Activated CD4-positive, alpha-beta T cell treated with anti-CD3 and anti-CD28 coated beads for 36 hours (primary cell): ENCODE measurements at regions of chr6 and their contacts with region 1.

Region 1: GRCh38 chr6:42928986-42929820 is at the start of gene CNPY3:
- DNase-seq: peak; percentile 98
- ATAC-seq: peak; percentile 88
- H3K4me3 Mint-ChIP-seq: peak within 1 kb of the TSS; percentile 84
- H3K27ac Mint-ChIP-seq: peak within 1 kb of the TSS; percentile 93
- H3K4me1 Mint-ChIP-seq: peaks cover 40% of the 10 kb centered on the region
- H3K27me3 Mint-ChIP-seq: no peaks in the 10 kb centered on the region
- total RNA-seq, gene CNPY3: 33.0 to 34.3 TPM

Region 2: GRCh38 chr6:42782622-42783176 is 146.5 kb before region 1 on chr6:
- CTCF ChIA-PET with region 1: no interaction called
- POLR2A ChIA-PET with region 1: interaction called, 3 read pairs
- intact Hi-C with region 1: loop called in 1 of 2 experiments (anchors 1 kb)
- DNase-seq: peak; percentile 83
- ATAC-seq: peak; percentile 64
- H3K4me3 Mint-ChIP-seq: peak overlapping the region; percentile 81
- H3K27ac Mint-ChIP-seq: peak overlapping the region; percentile 96
- H3K4me1 Mint-ChIP-seq: peaks cover 25% of the 10 kb centered on the region
- H3K27me3 Mint-ChIP-seq: no peaks in the 10 kb centered on the region

Region 3: GRCh38 chr6:42901536-42901957 is 27.7 kb before region 1 on chr6:
- CTCF ChIA-PET with region 1: interaction called, 9 read pairs
- POLR2A ChIA-PET with region 1: no interaction called
- intact Hi-C with region 1: loop called in 1 of 2 experiments (anchors 1 kb)
- DNase-seq: peak; percentile 77
- ATAC-seq: peak; percentile 93
- H3K4me3 Mint-ChIP-seq: peak overlapping the region; percentile 7
- H3K27ac Mint-ChIP-seq: no peak overlapping the region
- H3K4me1 Mint-ChIP-seq: peaks cover 9% of the 10 kb centered on the region
- H3K27me3 Mint-ChIP-seq: no peaks in the 10 kb centered on the region

Region 4: GRCh38 chr6:43013843-43014433 is 84.7 kb after region 1 on chr6 and contains the starts of genes KLHDC3 and MEA1:
- CTCF ChIA-PET with region 1: no interaction called
- POLR2A ChIA-PET with region 1: interaction called, 10 read pairs
- intact Hi-C with region 1: loop called (anchors 1 kb)
- DNase-seq: peak; percentile 99
- ATAC-seq: peak; percentile 96
- H3K4me3 Mint-ChIP-seq: peak within 1 kb of the TSS; percentile 91
- H3K27ac Mint-ChIP-seq: peak within 1 kb of the TSS; percentile 87
- H3K4me1 Mint-ChIP-seq: peaks cover 39% of the 10 kb centered on the region
- H3K27me3 Mint-ChIP-seq: no peaks in the 10 kb centered on the region
- total RNA-seq, gene KLHDC3: 58.3 to 65.2 TPM
- total RNA-seq, gene MEA1: 93.4 to 129 TPM

Region 5: GRCh38 chr6:43075670-43076463 is 146.7 kb after region 1 on chr6 and contains the start of gene PTK7:
- CTCF ChIA-PET with region 1: no interaction called
- POLR2A ChIA-PET with region 1: no interaction called
- intact Hi-C with region 1: no loop called
- DNase-seq: peak; percentile 71
- ATAC-seq: peak; percentile 85
- H3K4me3 Mint-ChIP-seq: peak within 1 kb of the TSS; percentile 65
- H3K27ac Mint-ChIP-seq: no peak within 1 kb of the TSS
- H3K4me1 Mint-ChIP-seq: peaks cover 7% of the 10 kb centered on the region
- H3K27me3 Mint-ChIP-seq: peaks cover 9% of the 10 kb centered on the region
- total RNA-seq, gene PTK7: 4.1 to 4.6 TPM

Region 6: GRCh38 chr6:43181942-43182860 is 253.0 kb after region 1 on chr6 and contains the start of gene CUL9:
- CTCF ChIA-PET with region 1: interaction called, 3 read pairs
- POLR2A ChIA-PET with region 1: no interaction called
- intact Hi-C with region 1: loop called in 1 of 2 experiments (anchors 1 kb)
- DNase-seq: peak; percentile 90
- ATAC-seq: peak; percentile 95
- H3K4me3 Mint-ChIP-seq: peak within 1 kb of the TSS; percentile 90
- H3K27ac Mint-ChIP-seq: peak within 1 kb of the TSS; percentile 91
- H3K4me1 Mint-ChIP-seq: peaks cover 46% of the 10 kb centered on the region
- H3K27me3 Mint-ChIP-seq: no peaks in the 10 kb centered on the region
- total RNA-seq, gene CUL9: 34.0 to 35.1 TPM

Region 7: DNA sequence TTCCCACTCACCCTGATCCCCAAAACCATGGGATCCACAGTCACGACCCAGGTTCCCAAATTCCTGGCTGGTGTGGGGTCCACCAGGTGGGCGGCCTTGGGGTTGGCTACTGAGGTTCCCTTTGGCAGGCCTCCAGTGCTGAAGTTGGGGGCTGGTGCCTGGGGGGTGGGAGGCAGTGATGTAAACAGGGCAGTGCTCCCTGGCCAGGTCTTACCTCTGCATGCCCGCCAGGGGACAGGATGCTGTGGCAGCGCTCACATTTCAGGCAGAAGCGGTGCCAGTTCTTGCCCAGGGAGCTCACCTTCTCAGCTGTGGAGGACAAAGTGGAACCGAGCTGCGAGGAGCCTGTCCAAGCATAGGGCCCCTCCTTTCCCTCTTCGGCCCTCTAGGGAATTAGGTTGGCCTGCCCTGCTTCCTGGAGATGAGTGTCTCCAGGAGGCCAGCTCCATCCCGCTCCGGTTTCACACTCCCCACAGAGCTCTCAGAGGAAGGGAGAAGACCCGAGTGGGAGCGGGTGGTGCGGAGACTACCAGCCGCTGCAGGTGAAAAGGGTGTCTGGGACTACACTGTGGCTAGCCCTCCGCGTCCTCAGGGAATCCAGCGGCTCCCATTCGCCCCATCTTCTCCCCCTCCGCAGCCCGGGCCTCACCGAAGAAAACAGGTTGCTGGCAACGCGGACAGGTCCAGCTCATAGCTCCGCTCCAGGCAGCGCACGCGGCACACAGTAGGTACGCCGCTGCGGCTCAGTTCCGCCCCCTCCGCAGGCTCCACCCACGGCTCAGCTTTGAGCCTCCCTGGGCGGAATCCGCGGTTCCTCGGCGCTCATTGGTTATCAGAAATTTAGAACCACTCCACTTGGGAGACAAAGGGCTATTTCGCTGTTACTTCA is 379.1 kb after region 1 on chr6 and contains the start of gene CRIP3:
- CTCF ChIA-PET with region 1: no interaction called
- POLR2A ChIA-PET with region 1: no interaction called
- intact Hi-C with region 1: no loop called
- DNase-seq: peak; percentile 74
- ATAC-seq: peak; percentile 91
- H3K4me3 Mint-ChIP-seq: peak within 1 kb of the TSS; percentile 73
- H3K27ac Mint-ChIP-seq: peak within 1 kb of the TSS; percentile 59
- H3K4me1 Mint-ChIP-seq: peaks cover 3% of the 10 kb centered on the region
- H3K27me3 Mint-ChIP-seq: no peaks in the 10 kb centered on the region
- total RNA-seq, gene CRIP3: 1.6 to 1.8 TPM

Region 8: GRCh38 chr6:43477235-43478007 is 548.2 kb after region 1 on chr6 and contains the start of gene TJAP1:
- CTCF ChIA-PET with region 1: no interaction called
- POLR2A ChIA-PET with region 1: no interaction called
- intact Hi-C with region 1: loop called in 1 of 2 experiments (anchors 5 kb)
- DNase-seq: peak; percentile 98
- ATAC-seq: peak; percentile 99
- H3K4me3 Mint-ChIP-seq: peak within 1 kb of the TSS; percentile 98
- H3K27ac Mint-ChIP-seq: peak within 1 kb of the TSS; percentile 82
- H3K4me1 Mint-ChIP-seq: peaks cover 38% of the 10 kb centered on the region
- H3K27me3 Mint-ChIP-seq: no peaks in the 10 kb centered on the region
- total RNA-seq, gene TJAP1: 35.6 to 37.2 TPM